Naive thymus-derived CD8-positive, alpha-beta T cell (primary cell): ENCODE measurements at regions of chr3 and their contacts with region 1.

Region 1: DNA sequence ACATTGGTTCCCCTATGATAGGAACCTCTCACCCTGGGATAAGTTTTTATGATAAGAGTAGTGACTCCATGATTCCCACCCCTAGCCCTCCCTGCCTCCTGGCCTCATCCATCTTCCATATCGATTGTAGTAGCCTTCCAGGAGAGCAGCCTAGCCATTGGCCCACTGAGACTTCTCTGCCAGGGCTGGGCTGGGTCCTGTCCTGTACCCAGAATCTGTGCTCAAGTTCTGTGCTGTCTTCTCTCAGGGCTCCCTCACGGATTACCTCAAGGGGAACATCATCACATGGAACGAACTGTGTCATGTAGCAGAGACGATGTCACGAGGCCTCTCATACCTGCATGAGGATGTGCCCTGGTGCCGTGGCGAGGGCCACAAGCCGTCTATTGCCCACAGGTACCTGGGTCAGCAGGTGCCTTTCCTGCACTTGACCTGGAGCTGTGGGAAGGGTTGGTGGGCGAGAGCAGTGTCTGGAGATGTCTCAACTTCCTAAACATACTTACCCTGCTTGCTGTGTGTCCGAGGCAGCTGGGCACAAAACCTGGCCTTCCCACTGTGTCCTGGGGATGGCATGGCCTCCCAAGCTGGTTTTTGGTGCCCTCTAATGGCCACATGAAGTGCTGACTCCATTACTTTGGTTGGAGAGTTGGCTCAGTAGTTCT is 16.6 kb upstream of the EXOG start:
- DNase-seq: peak in 9 of 10 donors; percentile 18 to 71 (median 52)
- ATAC-seq: peak; percentile 53 to 83
- H3K4me3 Mint-ChIP-seq: no peak overlapping the region
- H3K27ac Mint-ChIP-seq: peak overlapping the region in 4 of 10 donors; percentile 28 to 73 (median 46)
- H3K4me1 Mint-ChIP-seq: peaks cover 0 to 21% (median 7%) of the 10 kb centered on the region in 4 donors
- H3K27me3 Mint-ChIP-seq: no peaks in the 10 kb centered on the region

Region 2: DNA sequence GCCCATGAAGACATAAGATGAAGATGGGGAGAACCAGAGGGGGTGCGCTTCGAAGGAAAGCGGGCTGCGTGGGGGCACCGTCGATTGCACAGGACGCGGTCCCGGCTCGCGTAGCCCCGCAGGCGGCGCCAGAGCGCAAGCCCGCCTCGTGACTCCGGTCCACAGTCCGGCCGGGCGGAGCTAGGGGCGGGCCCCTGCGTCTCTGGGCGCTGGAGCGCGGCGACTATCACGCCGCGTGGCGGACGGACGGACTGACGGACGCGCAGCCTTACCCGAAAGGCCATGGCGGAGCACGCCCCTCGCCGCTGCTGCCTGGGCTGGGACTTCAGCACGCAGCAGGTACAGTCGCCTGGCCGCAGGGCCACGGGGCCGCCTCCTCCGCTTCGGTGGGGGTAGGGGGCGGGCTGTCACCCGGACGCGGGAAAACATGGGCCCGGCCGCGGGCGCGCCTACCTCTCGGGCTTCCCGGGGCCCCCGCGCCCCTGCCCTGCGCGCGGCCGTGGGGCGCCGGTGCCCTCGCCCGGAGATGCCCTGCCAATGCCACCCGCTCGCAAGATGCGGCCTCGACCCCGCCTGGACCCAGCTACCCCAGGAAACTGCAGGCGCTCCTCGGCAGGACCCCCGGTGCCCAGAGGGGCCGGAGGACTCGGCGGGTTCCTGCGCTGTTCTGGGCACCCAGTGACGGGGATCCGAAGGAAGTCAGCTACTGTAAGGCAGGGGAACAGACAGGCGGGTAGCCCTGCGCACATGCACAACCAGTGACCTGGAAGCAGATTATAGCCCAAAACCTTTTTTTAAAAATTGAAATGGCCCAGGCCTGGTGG is 132.8 kb before region 1 on chr3 and contains the start of gene XYLB:
- POLR2A ChIA-PET with region 1: interaction called, 11 read pairs
- DNase-seq: peak; percentile 55 to 83 (median 71)
- ATAC-seq: peak; percentile 95 to 98
- H3K4me3 Mint-ChIP-seq: peak within 1 kb of the TSS; percentile 74 to 89 (median 86)
- H3K27ac Mint-ChIP-seq: peak within 1 kb of the TSS in 5 of 10 donors; percentile 21 to 68 (median 58)
- H3K4me1 Mint-ChIP-seq: peaks cover 2 to 7% (median 3%) of the 10 kb centered on the region in 4 donors
- H3K27me3 Mint-ChIP-seq: peaks cover 0 to 2% (median 0%) of the 10 kb centered on the region in 5 donors
- polyA plus RNA-seq, gene XYLB: 0.29 to 0.83 (median 0.77) TPM

Region 3: DNA sequence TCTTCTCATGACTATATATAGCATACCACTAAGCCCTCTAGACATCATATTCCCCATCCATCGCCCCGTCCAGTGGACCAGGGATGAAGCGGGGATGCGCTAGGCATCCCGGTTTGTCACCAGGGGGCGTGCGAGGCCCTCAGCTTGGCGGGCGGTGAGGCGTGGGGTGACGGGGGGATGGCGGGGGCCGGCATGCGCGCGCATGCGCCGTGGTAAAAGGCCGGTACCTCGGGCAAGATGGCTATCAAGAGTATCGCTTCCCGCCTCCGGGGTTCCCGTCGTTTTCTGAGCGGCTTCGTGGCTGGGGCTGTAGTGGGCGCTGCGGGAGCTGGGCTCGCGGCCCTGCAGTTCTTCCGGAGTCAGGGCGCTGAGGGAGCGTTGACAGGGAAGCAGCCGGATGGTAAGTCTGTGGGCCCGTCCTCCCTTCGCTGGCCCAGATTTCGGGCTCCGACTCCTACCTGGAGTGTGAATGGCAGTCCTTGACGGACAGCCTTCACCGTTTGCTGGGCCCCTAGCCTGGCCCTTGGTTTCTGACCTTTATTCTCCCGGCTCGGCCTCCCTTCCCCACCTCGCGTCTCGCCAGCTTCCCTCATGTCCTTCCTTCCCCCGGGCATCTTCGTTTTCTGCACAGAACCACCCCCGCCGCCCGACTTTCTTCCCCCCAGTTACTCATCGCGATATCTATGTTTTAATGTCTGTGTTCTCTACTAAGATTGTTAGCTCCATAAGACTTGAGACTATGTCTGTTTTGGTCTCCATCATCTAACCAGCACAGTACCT is 16.8 kb after region 1 on chr3 and contains the start of gene EXOG:
- POLR2A ChIA-PET with region 1: no interaction called
- DNase-seq: peak; percentile 86 to 97 (median 91)
- ATAC-seq: peak; percentile 91 to 94
- H3K4me3 Mint-ChIP-seq: peak within 1 kb of the TSS; percentile 88 to 99 (median 97)
- H3K27ac Mint-ChIP-seq: peak within 1 kb of the TSS; percentile 83 to 97 (median 90)
- H3K4me1 Mint-ChIP-seq: peaks cover 13 to 26% (median 22%) of the 10 kb centered on the region in 4 donors
- H3K27me3 Mint-ChIP-seq: no peaks in the 10 kb centered on the region
- polyA plus RNA-seq, gene EXOG: 2.6 to 8.4 (median 6.3) TPM